Body of pancreas (tissue), 4 donors: ENCODE measurements at regions of chr9 and their contacts with region 1.

Region 1: DNA sequence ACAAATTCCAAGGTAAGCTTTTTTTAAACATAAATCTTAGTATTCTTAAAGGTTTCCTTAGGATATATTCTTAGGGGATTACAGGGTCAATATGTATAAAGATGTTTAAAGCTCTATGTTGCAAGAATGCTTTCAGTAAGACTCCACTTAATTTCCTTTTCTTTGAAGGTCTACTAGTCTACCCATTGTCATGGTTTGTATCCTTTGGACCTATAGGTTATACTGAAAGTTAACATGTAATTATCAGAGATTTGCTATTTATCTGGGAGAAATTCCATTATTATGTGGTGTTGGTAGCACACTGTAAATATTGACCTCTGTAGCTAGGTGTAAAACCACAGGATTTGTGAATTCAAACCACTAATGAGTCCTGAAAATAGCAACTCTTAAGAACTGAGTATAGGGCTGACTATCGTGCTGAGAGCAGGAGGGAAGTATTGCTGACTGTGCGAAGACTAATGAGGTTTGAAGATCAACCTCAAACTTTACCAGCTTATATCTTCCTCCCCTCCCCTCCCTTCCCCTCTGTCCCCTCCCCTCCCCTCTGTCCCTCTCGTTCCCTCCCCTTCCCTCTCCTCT is 85.6 kb downstream of the GADD45G start:
- DNase-seq: no peak
- ATAC-seq: no peak
- H3K4me3 ChIP-seq: no peak overlapping the region
- H3K27ac ChIP-seq: no peak overlapping the region
- H3K4me1 ChIP-seq: peaks cover 32% of the 10 kb centered on the region
- H3K27me3 ChIP-seq: no peaks in the 10 kb centered on the region
- CTCF ChIP-seq: no peak
- POLR2A ChIP-seq: no peak

Region 2: DNA sequence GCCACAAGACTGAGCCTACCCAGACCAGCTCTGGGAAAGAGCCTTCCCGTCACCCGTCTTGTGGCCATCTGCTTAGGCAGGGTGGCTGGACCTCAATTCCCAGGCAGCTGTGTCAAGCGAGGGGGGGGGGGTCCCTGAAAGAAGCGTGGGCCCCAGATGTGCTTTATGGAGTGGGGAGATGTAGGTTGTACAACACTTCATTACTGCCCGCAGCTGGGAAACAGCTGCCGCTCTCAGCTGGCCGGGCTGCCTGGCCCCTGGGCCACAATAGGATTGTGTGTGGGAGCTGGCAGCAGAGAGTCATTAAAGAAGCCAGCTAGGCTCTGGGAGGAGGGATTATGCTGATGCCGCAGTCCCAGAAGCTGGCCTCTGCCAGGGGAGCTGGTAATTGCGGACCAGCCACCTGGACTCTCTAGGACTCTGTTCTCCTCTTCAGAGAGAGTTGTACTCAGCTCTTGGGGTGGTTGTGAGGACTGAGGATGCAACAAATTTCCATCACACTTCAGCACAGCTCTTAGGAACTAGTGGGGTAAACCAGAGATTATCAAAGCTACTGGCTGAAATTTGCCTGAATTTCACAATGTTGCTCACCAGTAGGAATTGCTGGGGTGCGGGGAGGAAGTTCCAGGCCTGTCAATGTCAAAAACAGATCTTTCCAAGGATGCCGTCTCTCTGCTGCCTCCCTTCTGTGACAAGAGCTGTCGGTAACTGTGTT is 59.9 kb after region 1 on chr9:
- intact Hi-C with region 1: loop called (anchors 10 kb)
- DNase-seq: no peak
- ATAC-seq: no peak
- H3K4me3 ChIP-seq: no peak overlapping the region
- H3K27ac ChIP-seq: no peak overlapping the region
- H3K4me1 ChIP-seq: peaks cover 14% of the 10 kb centered on the region
- H3K27me3 ChIP-seq: no peaks in the 10 kb centered on the region
- CTCF ChIP-seq: no peak
- POLR2A ChIP-seq: no peak

Region 3: GRCh38 chr9:90102292-90102901 is 412.0 kb after region 1 on chr9:
- intact Hi-C with region 1: loop called (anchors 10 kb)
- DNase-seq: peak; percentile 92 to 97 (median 95)
- ATAC-seq: peak; percentile 95
- H3K4me3 ChIP-seq: no peak overlapping the region
- H3K27ac ChIP-seq: peak overlapping the region in 2 of 4 donors; percentile 3 to 8
- H3K4me1 ChIP-seq: peaks cover 18% of the 10 kb centered on the region
- H3K27me3 ChIP-seq: no peaks in the 10 kb centered on the region
- CTCF ChIP-seq: peak; percentile 65 to 98 (median 94)
- POLR2A ChIP-seq: no peak